CD8-positive, alpha-beta T cell (primary cell): ENCODE measurements at regions of chr19 and their contacts with region 1.

Region 1: DNA sequence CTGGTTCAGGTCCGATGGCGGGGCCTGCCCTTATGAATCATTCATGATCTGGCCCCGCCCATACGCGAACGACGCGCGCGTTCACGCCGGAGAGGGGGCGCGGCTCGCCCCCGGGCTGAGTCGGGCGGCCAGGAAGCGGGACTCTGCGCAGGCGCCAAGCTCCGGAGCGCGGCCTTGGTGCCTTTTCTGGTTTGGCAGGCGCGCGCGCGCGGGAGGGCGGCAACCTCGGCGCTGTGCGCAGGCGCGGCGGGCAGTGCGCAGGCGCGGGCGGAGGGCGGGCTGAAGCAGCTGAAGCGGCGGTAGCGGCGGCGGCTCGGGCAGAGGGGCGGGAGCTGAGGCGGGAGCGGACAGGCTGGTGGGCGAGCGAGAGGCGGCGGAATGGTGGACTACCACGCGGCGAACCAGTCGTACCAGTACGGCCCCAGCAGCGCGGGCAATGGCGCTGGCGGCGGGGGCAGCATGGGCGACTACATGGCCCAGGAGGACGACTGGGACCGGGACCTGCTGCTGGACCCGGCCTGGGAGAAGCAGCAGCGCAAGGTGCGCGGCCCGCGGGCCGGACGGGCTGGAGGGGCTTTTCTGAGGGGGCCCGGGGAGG is at the start of gene ACTN4:
- DNase-seq: peak; percentile 99 to 100 (median 100)
- ATAC-seq: peak; percentile 94
- H3K4me3 ChIP-seq: peak within 1 kb of the TSS; percentile 83 to 89
- H3K4me3 Mint-ChIP-seq: peak within 1 kb of the TSS; percentile 91
- H3K27ac ChIP-seq: peak within 1 kb of the TSS; percentile 49 to 63
- H3K27ac Mint-ChIP-seq: peak within 1 kb of the TSS; percentile 73
- H3K4me1 ChIP-seq: peaks cover 23% of the 10 kb centered on the region
- H3K4me1 Mint-ChIP-seq: peaks cover 32% of the 10 kb centered on the region
- H3K27me3 ChIP-seq: peaks cover 7 to 16% of the 10 kb centered on the region in 2 experiments
- H3K27me3 Mint-ChIP-seq: peaks cover 31% of the 10 kb centered on the region
- CTCF ChIP-seq: no peak
- total RNA-seq, gene ACTN4: 110 to 111 TPM

Region 2: GRCh38 chr19:38658462-38659306 is 11.2 kb after region 1 on chr19:
- CTCF ChIA-PET with region 1: interaction called, 3 read pairs
- POLR2A ChIA-PET with region 1: interaction called, 5 read pairs
- intact Hi-C with region 1: loop called (anchors 1 kb)
- DNase-seq: no peak
- ATAC-seq: no peak
- H3K4me3 ChIP-seq: no peak overlapping the region
- H3K4me3 Mint-ChIP-seq: no peak overlapping the region
- H3K27ac ChIP-seq: peak overlapping the region in 1 of 2 experiments; percentile 22
- H3K27ac Mint-ChIP-seq: no peak overlapping the region
- H3K4me1 ChIP-seq: peaks cover 53% of the 10 kb centered on the region
- H3K4me1 Mint-ChIP-seq: peaks cover 64% of the 10 kb centered on the region
- H3K27me3 ChIP-seq: peaks cover 0 to 14% of the 10 kb centered on the region in 2 experiments
- H3K27me3 Mint-ChIP-seq: peaks cover 27% of the 10 kb centered on the region
- CTCF ChIP-seq: no peak

Region 3: GRCh38 chr19:38683393-38684080 is 36.1 kb after region 1 on chr19:
- CTCF ChIA-PET with region 1: interaction called, 3 read pairs
- POLR2A ChIA-PET with region 1: no interaction called
- intact Hi-C with region 1: loop called in 1 of 2 experiments (anchors 5 kb)
- DNase-seq: peak in 8 of 9 experiments; percentile 42 to 82 (median 62)
- ATAC-seq: peak; percentile 42
- H3K4me3 ChIP-seq: no peak overlapping the region
- H3K4me3 Mint-ChIP-seq: no peak overlapping the region
- H3K27ac ChIP-seq: peak overlapping the region in 1 of 2 experiments; percentile 89
- H3K27ac Mint-ChIP-seq: peak overlapping the region; percentile 85
- H3K4me1 ChIP-seq: peaks cover 44% of the 10 kb centered on the region
- H3K4me1 Mint-ChIP-seq: peaks cover 70% of the 10 kb centered on the region
- H3K27me3 ChIP-seq: no peaks in the 10 kb centered on the region
- H3K27me3 Mint-ChIP-seq: peaks cover 3% of the 10 kb centered on the region
- CTCF ChIP-seq: no peak

Region 4: DNA sequence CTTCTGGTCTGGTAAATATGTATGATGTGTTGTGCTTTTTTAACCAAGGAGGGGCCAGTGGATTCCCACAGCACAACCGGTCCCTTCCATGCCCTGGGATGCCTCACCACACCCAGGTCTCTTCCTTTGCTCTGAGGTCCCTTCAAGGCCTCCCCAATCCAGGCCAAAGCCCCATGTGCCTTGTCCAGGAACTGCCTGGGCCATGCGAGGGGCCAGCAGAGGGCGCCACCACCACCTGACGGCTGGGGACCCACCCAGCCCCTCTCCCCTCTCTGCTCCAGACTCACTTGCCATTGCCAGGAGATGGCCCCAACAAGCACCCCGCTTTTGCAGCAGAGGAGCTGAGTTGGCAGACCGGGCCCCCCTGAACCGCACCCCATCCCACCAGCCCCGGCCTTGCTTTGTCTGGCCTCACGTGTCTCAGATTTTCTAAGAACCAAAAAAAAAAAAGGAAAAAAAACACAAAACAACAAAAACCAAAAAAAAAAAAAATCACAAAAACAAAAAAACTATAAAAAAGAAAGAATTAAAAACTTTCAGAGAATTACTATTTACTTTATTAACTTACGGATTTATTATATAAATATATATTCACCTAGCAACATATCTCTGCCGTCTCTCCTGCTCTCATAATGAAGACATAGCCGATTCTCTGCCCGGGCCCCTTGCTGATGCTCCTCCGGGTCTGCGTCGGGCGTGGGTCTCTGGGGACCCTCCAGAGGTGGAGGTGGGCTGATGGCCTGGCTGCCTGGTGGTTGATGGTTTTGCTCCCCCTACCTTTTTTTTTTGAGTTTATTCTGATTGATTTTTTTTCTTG is 82.4 kb after region 1 on chr19:
- CTCF ChIA-PET with region 1: interaction called, 3 read pairs
- POLR2A ChIA-PET with region 1: no interaction called
- intact Hi-C with region 1: loop called (anchors 5 kb)
- DNase-seq: peak; percentile 47 to 86 (median 79)
- ATAC-seq: peak; percentile 62
- H3K4me3 ChIP-seq: no peak overlapping the region
- H3K4me3 Mint-ChIP-seq: no peak overlapping the region
- H3K27ac ChIP-seq: no peak overlapping the region
- H3K27ac Mint-ChIP-seq: no peak overlapping the region
- H3K4me1 ChIP-seq: peaks cover 17% of the 10 kb centered on the region
- H3K4me1 Mint-ChIP-seq: peaks cover 32% of the 10 kb centered on the region
- H3K27me3 ChIP-seq: no peaks in the 10 kb centered on the region
- H3K27me3 Mint-ChIP-seq: no peaks in the 10 kb centered on the region
- CTCF ChIP-seq: peak; percentile 75

Region 5: DNA sequence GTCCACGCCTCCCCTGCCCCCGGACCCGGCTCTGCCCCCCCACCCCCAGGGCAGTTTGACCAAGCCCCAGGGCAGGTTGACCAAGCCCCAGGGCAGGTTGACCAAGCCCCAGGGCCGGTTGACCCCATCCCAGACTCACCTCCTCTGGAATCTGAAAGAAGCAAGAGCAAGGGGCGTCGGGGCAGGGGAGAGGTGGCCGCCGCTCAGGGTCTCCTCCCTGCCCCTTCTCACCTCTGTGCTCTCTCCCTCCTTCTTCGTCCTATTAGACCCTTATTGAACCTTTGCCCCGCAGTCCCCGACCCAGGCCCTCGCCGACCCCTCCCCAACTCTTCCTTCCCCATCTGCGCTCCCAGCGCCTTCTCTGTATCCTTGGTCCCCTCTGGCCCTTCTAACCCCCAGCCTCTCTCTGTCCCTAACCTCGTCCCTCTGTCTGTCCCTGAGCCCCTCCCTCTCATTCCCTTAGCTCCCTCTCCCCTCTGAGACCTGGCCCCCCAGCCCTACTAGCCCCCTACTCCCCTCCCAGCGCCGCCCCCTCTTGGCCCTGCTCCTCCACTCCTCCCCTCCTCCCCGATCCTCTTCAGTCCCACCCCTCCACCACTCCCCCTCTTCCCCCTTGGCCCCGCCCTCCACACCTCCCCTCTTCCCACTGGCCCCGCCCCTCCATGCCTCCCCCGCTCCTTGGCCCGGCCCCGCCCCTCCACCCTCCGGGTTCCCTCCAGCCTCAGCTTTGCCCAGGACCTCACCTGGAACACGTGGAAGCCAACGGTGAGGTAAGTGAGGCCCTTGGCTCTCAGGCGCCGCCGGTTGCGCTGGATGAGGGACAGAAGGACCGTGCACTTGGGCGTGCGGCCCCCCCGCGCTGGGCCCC is 89.2 kb after region 1 on chr19:
- CTCF ChIA-PET with region 1: interaction called, 3 read pairs
- POLR2A ChIA-PET with region 1: no interaction called
- intact Hi-C with region 1: loop called (anchors 5 kb)
- DNase-seq: peak; percentile 27 to 78 (median 67)
- ATAC-seq: peak; percentile 27
- H3K4me3 ChIP-seq: peak overlapping the region; percentile 29 to 41
- H3K4me3 Mint-ChIP-seq: peak overlapping the region; percentile 66
- H3K27ac ChIP-seq: no peak overlapping the region
- H3K27ac Mint-ChIP-seq: no peak overlapping the region
- H3K4me1 ChIP-seq: peaks cover 45% of the 10 kb centered on the region
- H3K4me1 Mint-ChIP-seq: peaks cover 40% of the 10 kb centered on the region
- H3K27me3 ChIP-seq: no peaks in the 10 kb centered on the region
- H3K27me3 Mint-ChIP-seq: no peaks in the 10 kb centered on the region
- CTCF ChIP-seq: no peak

Region 6: DNA sequence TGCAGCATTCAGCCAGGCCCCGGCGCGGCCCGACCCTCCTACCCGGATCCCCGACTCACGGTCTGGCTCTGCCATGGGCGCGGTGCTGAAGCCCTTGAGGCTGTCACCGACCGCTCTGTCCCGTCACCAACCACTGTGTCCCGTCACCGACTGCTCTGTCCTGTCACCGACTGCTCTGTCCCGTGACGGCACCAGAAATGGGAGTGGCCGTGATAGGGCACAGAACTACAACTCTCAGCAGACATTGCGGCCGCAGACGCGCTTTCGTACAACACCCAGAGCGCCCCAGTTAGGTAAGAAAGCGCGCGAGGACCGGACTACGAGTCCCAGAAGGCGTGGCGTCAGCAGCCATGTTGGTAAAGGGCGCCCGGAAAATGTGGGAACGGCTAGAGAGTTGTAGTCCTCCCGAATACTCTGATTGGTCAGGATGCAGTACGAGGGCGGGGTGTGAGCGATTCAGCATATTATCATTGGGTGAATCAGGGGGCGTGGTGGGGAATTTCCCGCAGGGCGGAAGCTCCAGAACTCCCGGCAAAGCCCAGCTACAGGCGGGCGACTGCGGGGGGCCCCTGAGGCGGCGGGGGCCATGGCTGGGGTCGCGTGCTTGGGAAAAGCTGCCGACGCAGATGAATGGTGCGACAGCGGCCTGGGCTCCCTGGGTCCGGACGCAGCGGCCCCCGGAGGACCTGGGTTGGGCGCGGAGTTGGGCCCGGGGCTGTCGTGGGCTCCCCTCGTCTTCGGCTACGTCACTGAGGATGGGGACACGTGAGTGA is 252.2 kb after region 1 on chr19 and contains the starts of genes NFKBIB and SIRT2:
- CTCF ChIA-PET with region 1: no interaction called
- POLR2A ChIA-PET with region 1: no interaction called
- intact Hi-C with region 1: loop called in 1 of 2 experiments (anchors 2 kb)
- DNase-seq: peak; percentile 97 to 100 (median 99)
- ATAC-seq: peak; percentile 85
- H3K4me3 ChIP-seq: peak within 1 kb of the TSS; percentile 68 to 88
- H3K4me3 Mint-ChIP-seq: peak within 1 kb of the TSS; percentile 93
- H3K27ac ChIP-seq: peak within 1 kb of the TSS; percentile 93 to 100
- H3K27ac Mint-ChIP-seq: peak within 1 kb of the TSS; percentile 98
- H3K4me1 ChIP-seq: peaks cover 23% of the 10 kb centered on the region
- H3K4me1 Mint-ChIP-seq: peaks cover 57% of the 10 kb centered on the region
- H3K27me3 ChIP-seq: no peaks in the 10 kb centered on the region
- H3K27me3 Mint-ChIP-seq: no peaks in the 10 kb centered on the region
- CTCF ChIP-seq: no peak
- total RNA-seq, gene NFKBIB: 62.9 to 66.1 TPM
- total RNA-seq, gene SIRT2: 90.6 to 95.1 TPM